ENCODE measurements at regions of chr7 and their contacts with region 1.

Region 1: DNA sequence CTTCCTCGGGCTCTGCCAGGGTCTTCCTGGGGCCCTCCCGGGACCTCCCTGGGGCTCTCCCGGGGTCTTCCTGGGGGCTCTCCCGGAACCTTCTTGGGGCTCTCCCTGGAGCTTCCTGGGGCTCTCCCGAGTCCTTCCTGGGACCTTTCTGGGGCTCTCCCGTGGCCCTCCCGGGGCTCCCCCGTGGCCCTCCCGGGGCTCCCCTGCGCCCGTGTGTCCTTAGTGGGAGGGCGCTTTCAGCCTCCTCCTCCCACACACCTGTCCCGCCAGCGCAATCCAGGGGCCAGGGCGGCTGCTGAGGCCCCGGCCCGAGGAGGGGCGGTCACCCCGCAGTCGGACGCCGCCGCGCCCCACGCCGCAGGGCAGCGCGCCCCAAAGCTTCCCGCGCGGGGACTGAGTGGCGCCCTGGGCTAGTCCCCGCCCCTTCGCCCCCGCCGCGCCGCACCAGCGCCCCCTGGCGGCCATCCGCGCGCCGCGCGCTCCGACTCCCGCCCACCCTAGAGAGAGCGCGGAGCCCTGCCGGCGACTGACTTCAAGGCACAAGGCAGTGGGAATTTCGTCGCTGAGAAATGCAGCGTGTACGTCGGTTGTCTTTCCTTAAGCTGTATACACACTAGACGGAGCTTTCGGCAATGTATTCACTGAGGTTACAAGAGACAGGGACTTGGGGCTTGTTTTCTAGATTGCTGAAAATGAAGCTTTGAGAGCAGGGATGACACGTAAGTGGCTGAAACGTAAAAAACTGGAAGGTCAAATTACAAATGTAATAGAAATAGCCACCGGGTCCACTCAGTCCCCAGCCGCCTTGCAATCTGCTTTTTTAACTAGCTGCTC is 47.1 kb downstream of the INSIG1 start:
- DNase-seq: peak; percentile 70
- H3K4me3 ChIP-seq: peak overlapping the region in 1 of 3 experiments; percentile 14
- H3K27ac ChIP-seq: no peak overlapping the region
- H3K4me1 ChIP-seq: no peaks in the 10 kb centered on the region
- H3K27me3 ChIP-seq: peaks cover 2 to 3% of the 10 kb centered on the region in 2 experiments
- CTCF ChIP-seq: peak; percentile 79 to 82
- POLR2A ChIP-seq: no peak

Region 2: GRCh38 chr7:154913638-154914312 is 431.0 kb before region 1 on chr7:
- CTCF ChIA-PET with region 1: interaction called, 33 read pairs
- POLR2A ChIA-PET with region 1: no interaction called
- dilution Hi-C with region 1: no loop called
- intact Hi-C with region 1: loop called (anchors 1 kb)
- DNase-seq: peak; percentile 67
- H3K4me3 ChIP-seq: peak overlapping the region in 2 of 3 experiments; percentile 1 to 27
- H3K27ac ChIP-seq: no peak overlapping the region
- H3K4me1 ChIP-seq: peaks cover 4% of the 10 kb centered on the region
- H3K27me3 ChIP-seq: peaks cover 0 to 11% of the 10 kb centered on the region in 2 experiments
- CTCF ChIP-seq: peak; percentile 82 to 94
- POLR2A ChIP-seq: no peak

Region 3: GRCh38 chr7:155069992-155070751 is 274.6 kb before region 1 on chr7 and contains the start of gene HTR5A:
- CTCF ChIA-PET with region 1: interaction called, 3 read pairs
- POLR2A ChIA-PET with region 1: no interaction called
- dilution Hi-C with region 1: no loop called
- intact Hi-C with region 1: loop called (anchors 5 kb)
- DNase-seq: peak; percentile 85
- H3K4me3 ChIP-seq: no peak within 1 kb of the TSS
- H3K27ac ChIP-seq: no peak within 1 kb of the TSS
- H3K4me1 ChIP-seq: no peaks in the 10 kb centered on the region
- H3K27me3 ChIP-seq: no peaks in the 10 kb centered on the region
- CTCF ChIP-seq: no peak
- POLR2A ChIP-seq: no peak
- total RNA-seq, gene HTR5A: not detected in 2 replicates

Region 4: GRCh38 chr7:155195939-155196523 is 148.8 kb before region 1 on chr7:
- CTCF ChIA-PET with region 1: interaction called, 61 read pairs
- POLR2A ChIA-PET with region 1: no interaction called
- dilution Hi-C with region 1: loop called (anchors 25 kb)
- intact Hi-C with region 1: no loop called
- DNase-seq: no peak
- H3K4me3 ChIP-seq: no peak overlapping the region
- H3K27ac ChIP-seq: no peak overlapping the region
- H3K4me1 ChIP-seq: no peaks in the 10 kb centered on the region
- H3K27me3 ChIP-seq: peaks cover 4 to 6% of the 10 kb centered on the region in 2 experiments
- CTCF ChIP-seq: no peak
- POLR2A ChIP-seq: no peak

Region 5: GRCh38 chr7:155298834-155299534 is 45.8 kb before region 1 on chr7:
- CTCF ChIA-PET with region 1: interaction called, 18 read pairs
- POLR2A ChIA-PET with region 1: no interaction called
- dilution Hi-C with region 1: no loop called
- intact Hi-C with region 1: loop called (anchors 1 kb)
- DNase-seq: peak; percentile 96
- H3K4me3 ChIP-seq: peak overlapping the region; percentile 50 to 99 (median 91)
- H3K27ac ChIP-seq: peak overlapping the region; percentile 64
- H3K4me1 ChIP-seq: peaks cover 31% of the 10 kb centered on the region
- H3K27me3 ChIP-seq: no peaks in the 10 kb centered on the region
- CTCF ChIP-seq: no peak
- POLR2A ChIP-seq: peak; percentile 52

Measured in endothelial cell of umbilical vein (primary cell).